ENCODE measurements at regions of chr1 and their contacts with region 1.

Region 1: DNA sequence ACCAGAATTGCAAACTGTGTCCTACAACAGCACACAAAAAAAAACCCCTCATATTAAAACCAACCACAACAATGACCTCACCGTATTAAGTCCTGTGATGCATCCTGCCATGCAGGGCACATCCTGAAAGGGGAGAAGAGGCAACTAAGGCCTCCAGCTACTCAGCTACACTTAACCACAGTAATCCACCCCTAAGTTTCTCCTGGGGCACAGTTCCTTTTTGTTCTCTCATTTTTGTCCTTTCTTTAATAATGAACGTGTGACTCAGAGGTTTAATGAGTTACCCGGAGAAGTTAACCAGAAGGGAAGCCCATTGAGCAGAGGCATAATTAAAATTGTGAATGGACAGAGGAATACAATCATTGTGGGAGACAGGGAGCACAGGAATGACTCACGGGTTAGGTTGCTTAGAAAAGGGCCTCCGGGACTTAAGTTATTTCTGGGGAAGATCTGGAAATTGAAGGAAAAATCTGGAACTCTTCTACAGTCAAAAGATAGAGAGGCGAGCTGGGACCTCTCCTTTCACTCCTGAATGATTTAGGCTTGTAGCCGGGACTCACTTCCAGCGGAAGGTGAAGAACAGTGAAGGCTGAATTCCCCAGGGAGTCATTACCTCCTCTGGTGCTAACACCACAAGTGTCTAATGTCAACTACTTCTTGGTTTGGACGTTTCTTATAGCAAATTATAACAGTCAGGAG is 36.9 kb upstream of the HIVEP3 start:
- DNase-seq: peak; percentile 97
- ATAC-seq: peak; percentile 87
- H3K4me3 ChIP-seq: peak overlapping the region in 1 of 2 experiments; percentile 40; a peak in 2 of 4 replicates
- H3K27ac ChIP-seq: peak overlapping the region; percentile 93
- H3K4me1 ChIP-seq: peaks cover 50 to 66% of the 10 kb centered on the region in 2 experiments
- H3K27me3 ChIP-seq: no peaks in the 10 kb centered on the region
- CTCF ChIP-seq: no peak
- POLR2A ChIP-seq: no peak
- RAD21 ChIP-seq: peak; percentile 53

Region 2: GRCh38 chr1:41919764-41920397 is 35.7 kb before region 1 on chr1:
- CTCF ChIA-PET with region 1: no interaction called
- POLR2A ChIA-PET with region 1: no interaction called
- RAD21 ChIA-PET with region 1: no interaction called
- intact Hi-C with region 1: loop called (anchors 2 kb)
- DNase-seq: no peak
- ATAC-seq: peak; percentile 47
- H3K4me3 ChIP-seq: peak overlapping the region in 1 of 2 experiments; percentile 27; a peak in 2 of 4 replicates
- H3K27ac ChIP-seq: 0 out of 2 replicates have a peak overlapping the region, but pooled peaks have one; percentile 45
- H3K4me1 ChIP-seq: peaks cover 38 to 60% of the 10 kb centered on the region in 2 experiments
- H3K27me3 ChIP-seq: no peaks in the 10 kb centered on the region
- CTCF ChIP-seq: no peak
- POLR2A ChIP-seq: no peak
- RAD21 ChIP-seq: no peak

Region 3: DNA sequence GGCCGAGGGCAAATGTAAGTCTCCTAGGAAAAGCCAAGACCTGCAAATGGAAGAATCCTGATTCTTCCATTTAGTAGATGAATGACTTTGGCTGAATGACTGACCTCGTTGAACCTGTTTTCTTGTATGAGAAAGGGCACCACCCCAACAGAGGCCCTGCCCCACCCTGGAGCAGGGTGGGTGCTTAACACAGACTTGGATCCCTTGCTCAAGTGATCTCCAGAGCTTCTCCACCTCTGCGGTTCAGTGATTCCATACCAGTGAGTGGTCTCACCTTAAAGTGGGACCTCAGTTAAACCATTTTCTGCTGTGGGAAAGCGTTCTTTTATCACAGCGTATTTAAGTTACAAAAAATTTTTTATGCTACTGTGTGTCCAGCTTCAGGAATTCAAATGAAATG is 158.7 kb after region 1 on chr1:
- CTCF ChIA-PET with region 1: no interaction called
- POLR2A ChIA-PET with region 1: no interaction called
- RAD21 ChIA-PET with region 1: no interaction called
- intact Hi-C with region 1: no loop called
- DNase-seq: no peak
- ATAC-seq: no peak
- H3K4me3 ChIP-seq: no peak overlapping the region
- H3K27ac ChIP-seq: no peak overlapping the region
- H3K4me1 ChIP-seq: no peaks in the 10 kb centered on the region
- H3K27me3 ChIP-seq: no peaks in the 10 kb centered on the region
- CTCF ChIP-seq: no peak
- POLR2A ChIP-seq: no peak
- RAD21 ChIP-seq: no peak

Measured in HCT116 (cell line).